ENCODE measurements at regions of chr12 and their contacts with region 1.

Region 1: GRCh38 chr12:95593266-95593871 is 42.1 kb upstream of the USP44 start:
- DNase-seq: peak in 4 of 5 donors; percentile 76 to 84 (median 80)
- ATAC-seq: peak; percentile 91 to 98 (median 96)
- H3K4me3 ChIP-seq: no peak overlapping the region
- H3K27ac ChIP-seq: peak overlapping the region in 8 of 12 donors; percentile 28 to 73 (median 58)
- H3K4me1 ChIP-seq: peaks cover 0 to 19% (median 10%) of the 10 kb centered on the region in 12 donors
- H3K27me3 ChIP-seq: no peaks in the 10 kb centered on the region
- CTCF ChIP-seq: no peak
- POLR2A ChIP-seq: no peak

Region 2: GRCh38 chr12:95942524-95943329 is 349.4 kb after region 1 on chr12 and contains the start of gene CCDC38:
- intact Hi-C with region 1: loop called in 1 of 10 experiments (anchors 2 kb)
- DNase-seq: peak; percentile 72 to 85 (median 80)
- ATAC-seq: peak; percentile 90 to 99 (median 96)
- H3K4me3 ChIP-seq: peak within 1 kb of the TSS; percentile 62 to 92 (median 76)
- H3K27ac ChIP-seq: peak within 1 kb of the TSS; percentile 20 to 90 (median 74)
- H3K4me1 ChIP-seq: peaks cover 0 to 14% (median 6%) of the 10 kb centered on the region in 12 donors
- H3K27me3 ChIP-seq: no peaks in the 10 kb centered on the region
- CTCF ChIP-seq: no peak
- POLR2A ChIP-seq: no peak
- total RNA-seq, gene CCDC38: 0.08 to 0.20 TPM in 2 of 9 donors, not detected in the others

Region 3: GRCh38 chr12:95984685-95985084 is 391.3 kb after region 1 on chr12:
- intact Hi-C with region 1: no loop called
- DNase-seq: no peak
- ATAC-seq: no peak
- H3K4me3 ChIP-seq: no peak overlapping the region
- H3K27ac ChIP-seq: no peak overlapping the region
- H3K4me1 ChIP-seq: no peaks in the 10 kb centered on the region
- H3K27me3 ChIP-seq: no peaks in the 10 kb centered on the region
- CTCF ChIP-seq: no peak
- POLR2A ChIP-seq: no peak